Posterior vena cava (tissue), 2 donors: ENCODE measurements at regions of chr3 and their contacts with region 1.

Region 1: GRCh38 chr3:55910543-55910942 is 423.4 kb upstream of the WNT5A start:
- DNase-seq: no peak

Region 2: GRCh38 chr3:55965776-55966175 is 55.2 kb after region 1 on chr3:
- intact Hi-C with region 1: loop called in 1 of 2 experiments (anchors 2 kb)
- DNase-seq: no peak